ENCODE measurements at regions of chr16 and their contacts with region 1.

Region 1: DNA sequence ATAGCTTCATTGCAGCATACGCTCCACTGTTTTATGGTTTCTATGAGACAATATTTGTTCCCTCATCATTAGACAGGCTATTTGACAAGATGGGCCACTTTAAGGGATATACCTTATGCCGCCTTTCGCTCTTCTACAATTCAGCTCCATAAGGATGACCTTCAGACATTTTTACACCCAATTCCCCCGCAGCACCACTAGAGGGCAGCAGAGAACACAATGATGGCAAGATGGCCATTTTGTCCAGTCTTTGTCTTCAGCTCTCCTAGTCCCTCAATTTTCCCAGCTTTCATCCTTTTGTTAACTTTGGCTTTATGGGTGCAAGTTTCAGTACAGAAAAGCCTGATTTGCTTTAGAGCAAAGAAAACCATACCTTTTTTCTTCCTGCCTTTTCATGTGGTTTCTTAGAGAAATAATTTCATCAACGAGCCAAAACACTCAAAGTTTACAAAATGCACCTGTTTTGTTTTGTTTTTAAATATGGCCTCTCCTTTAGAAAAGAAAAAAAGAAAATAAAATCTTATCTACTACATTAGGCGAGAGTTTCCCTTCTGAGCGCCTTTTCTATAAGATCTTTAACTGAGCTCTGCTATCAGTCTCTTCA is 355.3 kb downstream of the TOX3 start:
- DNase-seq: peak; percentile 41 to 70
- ATAC-seq: peak; percentile 56 to 75; a peak in 4 of 6 replicates
- H3K4me3 ChIP-seq: no peak overlapping the region
- H3K27ac ChIP-seq: no peak overlapping the region
- H3K4me1 ChIP-seq: no peaks in the 10 kb centered on the region
- CTCF ChIP-seq: peak; percentile 80
- EP300 ChIP-seq: no peak
- POLR2A ChIP-seq: no peak
- RAD21 ChIP-seq: peak; percentile 81 to 84

Region 2: DNA sequence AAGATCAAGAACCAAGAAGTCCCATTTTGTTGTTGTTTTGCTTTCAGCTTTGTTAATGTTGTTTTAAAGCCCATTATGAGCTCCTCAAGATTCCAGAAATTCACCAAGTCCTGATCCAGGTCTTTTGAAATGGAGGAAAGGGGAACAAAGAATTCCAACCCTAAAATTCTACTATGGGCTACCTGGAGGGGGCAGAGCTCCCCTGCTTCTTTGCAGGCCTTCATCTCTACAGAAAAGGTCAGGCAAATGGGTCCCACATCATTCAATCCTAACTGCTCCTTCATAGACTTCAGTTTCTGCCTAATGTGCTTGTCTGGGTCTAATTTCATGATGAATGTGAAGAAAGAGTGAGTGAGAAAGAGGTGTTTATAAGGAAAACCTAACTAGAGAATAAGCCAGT is 20.2 kb before region 1 on chr16:
- CTCF ChIA-PET with region 1: interaction called, 10 read pairs
- POLR2A ChIA-PET with region 1: no interaction called
- DNase-seq: no peak
- ATAC-seq: no peak
- H3K4me3 ChIP-seq: no peak overlapping the region
- H3K27ac ChIP-seq: no peak overlapping the region
- H3K4me1 ChIP-seq: no peaks in the 10 kb centered on the region
- CTCF ChIP-seq: no peak
- EP300 ChIP-seq: no peak
- POLR2A ChIP-seq: no peak
- RAD21 ChIP-seq: no peak

Region 3: DNA sequence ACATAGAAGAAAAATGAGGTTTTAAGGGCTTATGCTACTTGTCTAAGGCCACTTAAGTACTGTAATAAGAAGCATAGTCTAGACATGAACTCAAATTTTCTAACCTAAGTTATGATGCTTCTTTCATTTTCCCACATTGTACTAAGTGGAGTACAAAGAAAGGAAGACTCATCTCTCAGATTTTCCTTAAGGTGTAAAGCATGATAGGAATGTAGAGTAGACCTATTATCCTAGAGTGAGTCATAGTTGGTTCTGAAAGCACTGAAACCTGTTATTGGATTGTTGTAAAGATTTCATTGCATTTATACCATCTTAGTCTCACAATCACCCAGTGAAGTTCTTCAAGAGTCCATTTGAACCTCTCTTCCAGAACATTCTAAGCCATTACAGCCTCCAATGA is 11.5 kb after region 1 on chr16:
- CTCF ChIA-PET with region 1: interaction called, 24 read pairs
- POLR2A ChIA-PET with region 1: no interaction called
- DNase-seq: no peak
- ATAC-seq: no peak
- H3K4me3 ChIP-seq: no peak overlapping the region
- H3K27ac ChIP-seq: no peak overlapping the region
- H3K4me1 ChIP-seq: no peaks in the 10 kb centered on the region
- CTCF ChIP-seq: no peak
- EP300 ChIP-seq: no peak
- POLR2A ChIP-seq: no peak
- RAD21 ChIP-seq: no peak

Region 4: GRCh38 chr16:52861614-52862022 is 670.0 kb after region 1 on chr16:
- CTCF ChIA-PET with region 1: interaction called, 22 read pairs
- POLR2A ChIA-PET with region 1: no interaction called
- DNase-seq: peak in 1 of 2 experiments; percentile 23
- ATAC-seq: no peak
- H3K4me3 ChIP-seq: no peak overlapping the region
- H3K27ac ChIP-seq: no peak overlapping the region
- H3K4me1 ChIP-seq: no peaks in the 10 kb centered on the region
- CTCF ChIP-seq: peak; percentile 38
- EP300 ChIP-seq: no peak
- POLR2A ChIP-seq: no peak
- RAD21 ChIP-seq: peak; percentile 63 to 66

Region 5: DNA sequence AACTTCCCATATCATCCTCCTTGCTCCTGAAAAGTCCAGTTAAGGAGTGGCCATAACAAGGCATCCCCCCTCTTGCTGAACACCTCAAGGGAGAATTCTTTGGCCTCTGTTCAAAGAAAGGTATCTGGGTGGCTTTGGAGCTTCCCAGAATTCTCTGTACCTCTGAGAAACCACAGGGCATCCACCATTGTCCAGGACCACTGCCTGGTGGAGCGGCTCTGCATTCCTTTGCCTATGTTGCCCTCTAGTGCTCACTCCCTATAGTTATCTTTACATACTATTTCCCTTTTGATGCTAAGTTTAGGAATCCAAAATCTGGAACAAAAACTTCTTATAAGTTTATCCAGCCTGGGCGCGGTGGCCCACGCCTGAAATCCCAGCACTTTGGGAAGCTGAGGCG is 830.7 kb after region 1 on chr16:
- CTCF ChIA-PET with region 1: interaction called, 32 read pairs
- POLR2A ChIA-PET with region 1: no interaction called
- DNase-seq: peak; percentile 55 to 69
- ATAC-seq: peak; percentile 98
- H3K4me3 ChIP-seq: no peak overlapping the region
- H3K27ac ChIP-seq: no peak overlapping the region
- H3K4me1 ChIP-seq: no peaks in the 10 kb centered on the region
- CTCF ChIP-seq: peak; percentile 75
- EP300 ChIP-seq: no peak
- POLR2A ChIP-seq: no peak
- RAD21 ChIP-seq: peak; percentile 86 to 92